Astrocyte of the cerebellum (primary cell): ENCODE measurements at regions of chr12 and their contacts with region 1.

Region 1: GRCh38 chr12:89524541-89525285 is at the start of gene GALNT4:
- DNase-seq: peak; percentile 68
- H3K4me3 ChIP-seq: peak within 1 kb of the TSS; percentile 87
- CTCF ChIP-seq: peak; percentile 70

Region 2: DNA sequence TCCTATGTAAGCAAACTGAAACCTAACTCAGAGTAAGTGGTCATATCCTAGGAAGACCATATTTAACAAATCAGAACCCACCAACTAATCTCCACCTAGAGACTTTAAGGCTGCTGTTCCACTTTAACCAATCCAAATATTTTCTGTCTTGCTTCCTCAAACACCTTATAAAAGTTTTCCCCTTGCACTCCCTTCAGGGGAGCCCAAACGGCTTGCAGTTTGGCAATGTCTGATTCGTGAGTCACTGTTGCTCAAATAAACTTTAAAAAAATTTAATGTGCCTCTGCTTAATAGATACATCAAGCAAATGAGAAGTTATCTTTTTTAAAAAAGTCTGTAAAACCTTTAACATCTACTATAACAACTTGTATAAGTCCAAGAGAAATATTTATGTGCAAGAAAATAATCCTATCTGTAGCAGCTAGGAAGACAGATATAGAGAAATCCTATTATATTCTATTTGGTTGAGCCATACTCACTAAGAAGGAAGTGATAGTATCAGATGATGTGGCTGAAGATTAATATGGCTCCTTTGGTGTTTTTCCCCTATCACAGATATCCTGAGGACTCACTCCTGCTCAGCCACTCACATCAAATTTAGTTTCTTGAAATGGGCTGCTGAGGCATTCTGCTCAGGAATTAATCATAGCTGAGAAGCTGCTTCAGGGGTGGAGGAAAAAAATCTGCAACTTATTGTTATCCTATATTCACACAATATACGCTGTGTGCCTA is 107.3 kb before region 1 on chr12:
- in situ Hi-C with region 1: no loop called
- DNase-seq: no peak
- H3K4me3 ChIP-seq: no peak overlapping the region
- CTCF ChIP-seq: no peak

Region 3: DNA sequence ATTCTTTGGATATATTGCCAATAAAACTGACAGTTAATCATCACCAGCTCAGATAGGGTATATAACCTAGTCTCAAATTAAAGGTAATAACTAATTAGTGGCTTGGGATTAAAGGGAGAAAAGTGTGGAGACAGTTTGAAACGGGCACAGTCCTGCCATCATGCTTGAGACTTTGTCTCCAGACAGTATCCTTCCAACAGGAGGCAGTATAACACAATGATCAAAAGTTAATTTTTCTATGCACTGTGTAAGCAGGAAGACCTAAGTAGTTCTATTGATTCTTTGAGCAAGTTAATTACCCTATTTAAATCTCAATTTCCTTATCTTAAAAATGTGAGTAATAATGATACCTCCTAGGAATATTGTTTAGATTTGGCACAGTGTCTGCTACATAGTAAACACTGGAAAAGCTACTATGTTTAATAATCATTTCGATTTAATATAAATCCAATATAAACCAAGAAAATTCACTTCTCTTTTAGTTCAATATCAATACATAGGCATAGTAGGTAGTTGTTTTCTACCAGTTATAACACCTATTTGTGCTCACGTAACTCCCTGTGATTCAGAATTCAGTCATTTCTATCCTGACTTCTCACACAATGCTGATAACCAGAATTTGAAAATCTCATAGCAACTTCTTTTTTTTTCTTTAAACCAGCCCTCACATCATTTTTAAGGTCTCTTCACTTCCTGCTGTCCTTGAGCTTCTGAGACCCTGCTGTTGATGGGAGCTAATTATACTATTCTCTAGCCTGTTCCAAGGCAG is 53.8 kb before region 1 on chr12:
- in situ Hi-C with region 1: loop called (anchors 5 kb)
- DNase-seq: peak; percentile 31
- H3K4me3 ChIP-seq: no peak overlapping the region
- CTCF ChIP-seq: peak; percentile 50